CD14-positive monocyte (primary cell): ENCODE measurements at regions of chr5 and their contacts with region 1.

Region 1: DNA sequence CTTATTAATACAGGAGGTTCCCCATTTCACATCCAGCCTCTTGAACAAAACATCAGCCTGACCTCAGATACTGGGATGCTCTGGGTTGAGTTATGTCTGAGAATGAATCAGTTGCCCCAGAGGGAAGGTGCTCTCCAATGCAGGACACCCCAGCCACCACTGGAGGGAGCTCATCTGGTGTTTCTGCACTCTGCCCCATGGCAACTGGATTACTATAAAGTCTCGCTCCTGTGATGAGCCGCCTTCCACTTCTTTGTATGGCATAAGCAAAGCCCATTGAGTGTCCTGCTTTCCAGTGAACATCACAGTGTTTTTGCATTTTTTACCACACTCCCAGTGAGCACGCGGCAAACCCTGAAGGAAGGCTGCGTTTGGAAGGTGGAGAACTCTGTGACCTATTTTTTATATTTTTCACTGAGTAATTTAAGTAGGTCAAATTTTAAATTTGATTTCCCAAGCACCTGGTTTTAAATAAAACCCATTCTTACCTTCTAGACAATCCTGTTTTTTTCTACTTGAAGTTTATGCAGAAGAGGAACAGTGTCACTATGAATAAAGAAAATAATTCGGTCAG is 176.9 kb upstream of the WWC1 start:
- DNase-seq: peak; percentile 12 to 44 (median 37)
- H3K4me3 ChIP-seq: no peak overlapping the region
- H3K4me3 Mint-ChIP-seq: no peak overlapping the region
- H3K27ac ChIP-seq: no peak overlapping the region
- H3K27ac Mint-ChIP-seq: no peak overlapping the region
- H3K4me1 ChIP-seq: peaks cover 19 to 23% of the 10 kb centered on the region in 2 donors
- H3K4me1 Mint-ChIP-seq: peaks cover 22% of the 10 kb centered on the region
- H3K27me3 ChIP-seq: no peaks in the 10 kb centered on the region
- H3K27me3 Mint-ChIP-seq: peaks cover 2 to 3% (median 3%) of the 10 kb centered on the region in 3 donors
- CTCF ChIP-seq: peak; percentile 77

Region 2: GRCh38 chr5:168219515-168220410 is 105.2 kb after region 1 on chr5:
- intact Hi-C with region 1: loop called (anchors 2 to 10 kb)
- DNase-seq: peak; percentile 45 to 82 (median 72)
- H3K4me3 ChIP-seq: peak overlapping the region in 1 of 3 experiments; percentile 23
- H3K4me3 Mint-ChIP-seq: peak overlapping the region in 1 of 2 donors; percentile 30
- H3K27ac ChIP-seq: no peak overlapping the region
- H3K27ac Mint-ChIP-seq: no peak overlapping the region
- H3K4me1 ChIP-seq: peaks cover 0 to 4% of the 10 kb centered on the region in 2 donors
- H3K4me1 Mint-ChIP-seq: peaks cover 3% of the 10 kb centered on the region
- H3K27me3 ChIP-seq: peaks cover 0 to 2% of the 10 kb centered on the region in 2 donors
- H3K27me3 Mint-ChIP-seq: peaks cover 5 to 10% (median 6%) of the 10 kb centered on the region in 3 donors
- CTCF ChIP-seq: peak; percentile 85

Region 3: GRCh38 chr5:168251259-168251658 is 136.7 kb after region 1 on chr5:
- intact Hi-C with region 1: no loop called
- DNase-seq: no peak
- H3K4me3 ChIP-seq: no peak overlapping the region
- H3K4me3 Mint-ChIP-seq: no peak overlapping the region
- H3K27ac ChIP-seq: no peak overlapping the region
- H3K27ac Mint-ChIP-seq: no peak overlapping the region
- H3K4me1 ChIP-seq: no peaks in the 10 kb centered on the region
- H3K4me1 Mint-ChIP-seq: no peaks in the 10 kb centered on the region
- H3K27me3 ChIP-seq: no peaks in the 10 kb centered on the region
- H3K27me3 Mint-ChIP-seq: peaks cover 0 to 5% (median 1%) of the 10 kb centered on the region in 3 donors
- CTCF ChIP-seq: no peak

Region 4: GRCh38 chr5:168528521-168529372 is 414.2 kb after region 1 on chr5 and contains the start of gene FBLL1:
- intact Hi-C with region 1: no loop called
- DNase-seq: no peak
- H3K4me3 ChIP-seq: peak within 1 kb of the TSS in 1 of 3 experiments; percentile 40
- H3K4me3 Mint-ChIP-seq: peak within 1 kb of the TSS; percentile 27 to 84
- H3K27ac ChIP-seq: no peak within 1 kb of the TSS
- H3K27ac Mint-ChIP-seq: no peak within 1 kb of the TSS
- H3K4me1 ChIP-seq: no peaks in the 10 kb centered on the region
- H3K4me1 Mint-ChIP-seq: peaks cover 10% of the 10 kb centered on the region
- H3K27me3 ChIP-seq: peaks cover 31 to 40% of the 10 kb centered on the region in 2 donors
- H3K27me3 Mint-ChIP-seq: peaks cover 40 to 53% (median 50%) of the 10 kb centered on the region in 3 donors
- CTCF ChIP-seq: no peak
- polyA plus RNA-seq, gene FBLL1: 0.08 TPM in 1 of 3 donors, not detected in the others